ENCODE measurements at regions of chr14 and their contacts with region 1.

Region 1: DNA sequence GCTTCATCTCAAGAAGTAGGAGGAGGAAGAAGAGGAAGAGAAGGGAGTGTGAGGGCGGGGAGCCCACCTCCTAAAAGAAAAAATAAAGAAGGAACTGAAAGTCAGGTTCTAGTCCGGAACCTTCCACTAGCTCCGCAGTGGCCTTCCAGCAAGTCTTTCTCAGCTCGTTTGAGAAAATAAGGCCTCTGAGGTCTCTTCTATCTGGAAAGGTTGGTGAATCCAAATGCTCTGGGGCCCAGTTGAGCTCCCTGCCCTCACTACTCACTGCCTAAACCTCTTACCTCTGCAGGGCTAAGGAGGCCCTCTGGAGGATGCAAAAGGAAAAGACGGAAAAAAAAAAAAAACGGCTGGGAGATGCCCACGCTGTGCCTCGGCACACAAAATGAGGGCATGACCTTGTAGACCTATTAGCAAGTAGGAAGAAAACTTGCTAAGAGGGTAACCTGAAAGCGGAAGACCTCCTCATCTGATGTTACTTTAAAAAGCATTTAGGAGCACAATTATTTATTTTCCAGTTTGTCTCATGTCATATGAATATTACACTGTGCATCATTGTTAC is 35.9 kb downstream of the FBLN5 start:
- DNase-seq: peak; percentile 80
- H3K4me3 ChIP-seq: no peak overlapping the region
- H3K27ac ChIP-seq: no peak overlapping the region
- H3K4me1 ChIP-seq: no peaks in the 10 kb centered on the region
- H3K27me3 ChIP-seq: no peaks in the 10 kb centered on the region
- CTCF ChIP-seq: peak; percentile 65

Region 2: GRCh38 chr14:91323671-91324605 is 587.6 kb before region 1 on chr14:
- CTCF ChIA-PET with region 1: interaction called, 6 read pairs
- POLR2A ChIA-PET with region 1: no interaction called
- intact Hi-C with region 1: loop called (anchors 5 kb)
- DNase-seq: peak; percentile 84
- H3K4me3 ChIP-seq: peak overlapping the region; percentile 28
- H3K27ac ChIP-seq: peak overlapping the region; percentile 60
- H3K4me1 ChIP-seq: peaks cover 15% of the 10 kb centered on the region
- H3K27me3 ChIP-seq: no peaks in the 10 kb centered on the region
- CTCF ChIP-seq: peak; percentile 98

Region 3: GRCh38 chr14:91649930-91650329 is 261.6 kb before region 1 on chr14:
- CTCF ChIA-PET with region 1: interaction called, 3 read pairs
- POLR2A ChIA-PET with region 1: no interaction called
- intact Hi-C with region 1: loop called (anchors 2 kb)
- DNase-seq: peak; percentile 19
- H3K4me3 ChIP-seq: no peak overlapping the region
- H3K27ac ChIP-seq: no peak overlapping the region
- H3K4me1 ChIP-seq: no peaks in the 10 kb centered on the region
- H3K27me3 ChIP-seq: no peaks in the 10 kb centered on the region
- CTCF ChIP-seq: peak; percentile 51; the same call in 1 of the 2 replicates

Region 4: GRCh38 chr14:91660790-91661189 is 250.8 kb before region 1 on chr14:
- CTCF ChIA-PET with region 1: no interaction called
- POLR2A ChIA-PET with region 1: interaction called, 11 read pairs
- intact Hi-C with region 1: no loop called
- DNase-seq: no peak
- H3K4me3 ChIP-seq: no peak overlapping the region
- H3K27ac ChIP-seq: no peak overlapping the region
- H3K4me1 ChIP-seq: no peaks in the 10 kb centered on the region
- H3K27me3 ChIP-seq: peaks cover 12% of the 10 kb centered on the region
- CTCF ChIP-seq: no peak

Region 5: GRCh38 chr14:91732452-91733167 is 178.9 kb before region 1 on chr14:
- CTCF ChIA-PET with region 1: no interaction called
- POLR2A ChIA-PET with region 1: no interaction called
- intact Hi-C with region 1: no loop called
- DNase-seq: no peak
- H3K4me3 ChIP-seq: no peak overlapping the region
- H3K27ac ChIP-seq: no peak overlapping the region
- H3K4me1 ChIP-seq: no peaks in the 10 kb centered on the region
- H3K27me3 ChIP-seq: peaks cover 19% of the 10 kb centered on the region
- CTCF ChIP-seq: no peak

Region 6: GRCh38 chr14:92323011-92323915 is 411.7 kb after region 1 on chr14 and contains the start of gene SLC24A4:
- CTCF ChIA-PET with region 1: no interaction called
- POLR2A ChIA-PET with region 1: no interaction called
- intact Hi-C with region 1: no loop called
- DNase-seq: peak; percentile 26
- H3K4me3 ChIP-seq: peak within 1 kb of the TSS; percentile 15
- H3K27ac ChIP-seq: no peak within 1 kb of the TSS
- H3K4me1 ChIP-seq: no peaks in the 10 kb centered on the region
- H3K27me3 ChIP-seq: peaks cover 79% of the 10 kb centered on the region
- CTCF ChIP-seq: no peak
- total RNA-seq, gene SLC24A4: 0.15 TPM in 1 of 2 replicates, not detected in the other